K562 (cell line): ENCODE measurements at regions of chr6 and their contacts with region 1.

Region 1: GRCh38 chr6:84227434-84228197 is at the start of gene CEP162:
- DNase-seq: peak; percentile 87 to 93 (median 88)
- ATAC-seq: peak; percentile 99
- H3K4me3 ChIP-seq: peak within 1 kb of the TSS; percentile 82
- H3K27ac ChIP-seq: peak within 1 kb of the TSS; percentile 59; the same call in 2 of the 3 replicates
- H3K4me1 ChIP-seq: peaks cover 0 to 2% of the 10 kb centered on the region in 2 experiments; a peak in 2 of 5 replicates
- H3K27me3 ChIP-seq: no peaks in the 10 kb centered on the region
- CTCF ChIP-seq: peak; percentile 60 to 77 (median 76)
- EP300 ChIP-seq: no peak
- POLR2A ChIP-seq: peak; percentile 41; the same call in 1 of the 2 replicates
- RAD21 ChIP-seq: peak; percentile 61
- polyA plus RNA-seq, gene CEP162: 3.9 to 4.3 TPM

Region 2: GRCh38 chr6:84052204-84052882 is 175.3 kb before region 1 on chr6:
- CTCF ChIA-PET with region 1: no interaction called
- POLR2A ChIA-PET with region 1: no interaction called
- in situ Hi-C with region 1: no loop called
- intact Hi-C with region 1: loop called (anchors 10 kb)
- DNase-seq: peak; percentile 55 to 84 (median 69)
- ATAC-seq: peak; percentile 93
- H3K4me3 ChIP-seq: 0 out of 2 replicates have a peak overlapping the region, but pooled peaks have one; percentile 2
- H3K27ac ChIP-seq: peak overlapping the region; percentile 65
- H3K4me1 ChIP-seq: peaks cover 24 to 33% of the 10 kb centered on the region in 2 experiments
- H3K27me3 ChIP-seq: no peaks in the 10 kb centered on the region
- CTCF ChIP-seq: peak in 2 of 3 experiments; percentile 8 to 29; a peak in 3 of 6 replicates
- EP300 ChIP-seq: no peak
- POLR2A ChIP-seq: no peak
- RAD21 ChIP-seq: peak in 1 of 2 experiments; percentile 27; a peak in 1 of 4 replicates

Region 3: DNA sequence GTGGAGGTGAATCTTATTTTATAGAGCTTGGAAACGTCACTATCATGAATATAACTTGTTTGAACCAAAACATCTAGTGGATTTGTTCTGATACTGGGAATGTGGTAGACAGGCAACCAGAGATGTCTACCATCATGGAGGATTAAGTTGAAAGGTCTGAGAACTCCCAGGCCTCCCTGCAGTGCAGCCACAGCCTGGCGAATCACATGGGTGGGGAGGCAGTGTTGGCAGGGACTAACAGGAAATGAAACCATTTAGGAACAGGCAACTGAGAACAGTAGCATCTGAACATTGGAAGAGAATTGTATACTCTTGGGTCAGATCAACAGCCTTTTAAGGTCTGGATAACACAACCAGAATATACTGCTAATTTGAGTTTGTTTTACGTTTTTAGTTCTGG is 22.1 kb after region 1 on chr6:
- CTCF ChIA-PET with region 1: no interaction called
- POLR2A ChIA-PET with region 1: no interaction called
- in situ Hi-C with region 1: no loop called
- intact Hi-C with region 1: no loop called
- DNase-seq: no peak
- ATAC-seq: peak; percentile 49; the same call in 2 of the 3 replicates
- H3K4me3 ChIP-seq: no peak overlapping the region
- H3K27ac ChIP-seq: no peak overlapping the region
- H3K4me1 ChIP-seq: no peaks in the 10 kb centered on the region
- H3K27me3 ChIP-seq: no peaks in the 10 kb centered on the region
- CTCF ChIP-seq: no peak
- EP300 ChIP-seq: no peak
- POLR2A ChIP-seq: no peak
- RAD21 ChIP-seq: no peak

Region 4: DNA sequence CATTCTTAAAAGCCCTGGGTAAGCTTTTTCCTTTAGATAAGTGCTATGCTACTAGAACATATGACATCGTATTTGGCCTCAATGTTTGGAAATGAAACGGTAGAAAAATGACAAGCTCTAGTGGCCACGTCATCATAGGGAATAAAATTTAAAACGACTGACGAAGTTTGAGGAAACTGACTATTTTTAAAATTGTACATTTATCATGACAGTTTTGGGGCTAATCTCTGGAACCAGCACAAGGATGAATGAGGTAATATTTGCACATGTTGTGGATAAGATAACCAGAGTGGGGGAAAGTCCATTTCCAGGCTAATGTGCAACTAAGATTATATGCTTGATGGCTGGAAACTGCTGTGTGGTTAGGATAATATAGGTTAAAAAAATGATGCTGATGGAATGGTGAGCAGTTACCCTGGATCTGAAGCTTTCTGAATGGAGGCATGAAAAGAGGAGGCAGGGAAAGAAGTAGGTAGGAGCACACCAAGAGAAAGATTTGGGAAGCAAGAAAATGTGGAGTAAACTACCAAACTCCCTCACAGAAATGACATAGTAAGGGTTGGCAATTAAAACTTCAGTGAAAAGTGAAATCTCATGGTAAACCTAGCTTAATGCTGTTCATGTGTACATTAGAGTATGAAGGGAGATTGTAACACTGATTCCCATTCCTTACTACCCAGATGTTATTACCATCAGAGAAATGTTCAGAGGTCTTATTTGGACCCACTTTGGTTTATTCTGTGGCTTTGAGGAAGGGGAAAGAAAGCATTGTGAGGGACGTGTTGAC is 42.5 kb after region 1 on chr6:
- CTCF ChIA-PET with region 1: no interaction called
- POLR2A ChIA-PET with region 1: no interaction called
- in situ Hi-C with region 1: no loop called
- intact Hi-C with region 1: loop called (anchors 2 kb)
- DNase-seq: peak; percentile 45 to 92 (median 70)
- ATAC-seq: peak; percentile 94
- H3K4me3 ChIP-seq: no peak overlapping the region
- H3K27ac ChIP-seq: peak overlapping the region; percentile 87
- H3K4me1 ChIP-seq: peaks cover 0 to 27% of the 10 kb centered on the region in 2 experiments; a peak in 2 of 5 replicates
- H3K27me3 ChIP-seq: no peaks in the 10 kb centered on the region
- CTCF ChIP-seq: no peak
- EP300 ChIP-seq: peak; percentile 99
- POLR2A ChIP-seq: no peak
- RAD21 ChIP-seq: no peak; a peak in 1 of 4 replicates

Region 5: DNA sequence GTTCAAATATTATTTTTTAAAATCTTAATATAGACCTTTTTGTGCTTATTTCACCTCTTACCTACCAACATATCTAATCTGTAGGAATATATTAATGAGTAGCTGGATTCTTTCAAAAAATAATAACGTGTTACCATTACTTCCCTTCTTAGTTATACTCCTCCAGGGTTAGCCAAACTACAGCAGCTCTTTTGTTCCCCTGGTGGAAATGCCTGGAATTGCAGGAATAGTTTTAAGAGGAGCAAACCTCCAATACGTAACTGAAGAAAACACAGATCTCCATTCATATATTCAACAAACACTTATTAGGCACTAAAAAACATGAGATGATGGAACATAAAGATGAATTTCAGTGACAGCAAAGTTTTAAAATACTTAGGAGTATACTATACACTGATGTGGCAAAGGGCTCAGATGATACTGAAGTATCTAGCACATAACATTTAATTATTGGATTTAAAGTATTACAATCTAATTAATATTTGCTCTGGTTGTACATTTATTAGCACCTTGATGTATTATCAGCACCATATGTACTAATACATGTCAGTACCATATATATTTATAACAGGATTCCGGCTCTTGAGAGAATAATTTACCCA is 458.5 kb after region 1 on chr6:
- CTCF ChIA-PET with region 1: no interaction called
- POLR2A ChIA-PET with region 1: no interaction called
- in situ Hi-C with region 1: no loop called
- intact Hi-C with region 1: no loop called
- DNase-seq: peak; percentile 18 to 51 (median 21)
- ATAC-seq: peak; percentile 77
- H3K4me3 ChIP-seq: no peak overlapping the region
- H3K27ac ChIP-seq: no peak overlapping the region
- H3K4me1 ChIP-seq: no peaks in the 10 kb centered on the region
- H3K27me3 ChIP-seq: no peaks in the 10 kb centered on the region
- CTCF ChIP-seq: peak in 2 of 3 experiments; percentile 63 to 64; a peak in 5 of 6 replicates
- EP300 ChIP-seq: no peak
- POLR2A ChIP-seq: no peak
- RAD21 ChIP-seq: peak; percentile 44 to 71

Region 6: DNA sequence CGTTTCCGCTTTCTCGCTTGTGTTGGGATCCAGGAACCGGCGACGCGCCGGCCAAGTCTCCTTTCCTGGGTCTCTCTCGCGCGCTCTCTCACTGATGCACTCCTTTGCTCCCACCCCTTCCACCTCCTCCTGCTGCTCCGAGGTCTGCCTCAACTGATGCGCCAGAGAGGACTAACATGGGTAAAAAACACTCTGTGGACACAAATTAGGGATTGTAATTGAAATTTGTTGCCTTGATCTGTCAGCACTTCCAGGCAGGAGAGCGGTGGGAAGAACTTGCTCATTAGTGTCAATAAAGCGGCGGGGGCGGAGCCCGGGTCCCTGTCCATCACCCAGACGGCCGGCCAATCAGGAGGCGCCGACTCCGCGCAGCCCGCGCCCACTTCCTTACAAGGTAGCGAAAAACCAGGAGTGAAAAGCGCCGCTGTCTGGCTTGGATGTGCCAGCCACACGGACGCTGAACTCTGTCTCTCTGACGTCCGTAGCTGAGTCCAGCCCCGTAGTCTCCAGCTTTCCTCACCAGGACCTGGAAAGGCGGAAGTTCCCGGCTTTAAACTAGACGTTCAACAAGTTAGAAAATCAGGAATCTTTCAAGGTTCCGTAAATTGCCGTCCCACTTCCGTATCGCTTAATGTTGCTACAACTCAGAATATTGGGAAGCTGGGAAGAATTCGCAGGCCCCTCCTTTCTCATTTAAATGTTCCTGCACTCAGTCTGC is 536.9 kb after region 1 on chr6 and contains the start of gene TBX18:
- CTCF ChIA-PET with region 1: no interaction called
- POLR2A ChIA-PET with region 1: no interaction called
- in situ Hi-C with region 1: no loop called
- intact Hi-C with region 1: loop called (anchors 5 kb)
- DNase-seq: peak; percentile 93 to 98 (median 94)
- ATAC-seq: peak; percentile 87
- H3K4me3 ChIP-seq: peak within 1 kb of the TSS; percentile 78
- H3K27ac ChIP-seq: peak within 1 kb of the TSS; percentile 87
- H3K4me1 ChIP-seq: peaks cover 7 to 15% of the 10 kb centered on the region in 2 experiments; a peak in 3 of 5 replicates
- H3K27me3 ChIP-seq: no peaks in the 10 kb centered on the region
- CTCF ChIP-seq: peak; percentile 28 to 33 (median 31); a peak in 4 of 6 replicates
- EP300 ChIP-seq: peak; percentile 47; the same call in 1 of the 2 replicates
- POLR2A ChIP-seq: peak; percentile 84
- RAD21 ChIP-seq: no peak; a peak in 1 of 4 replicates
- polyA plus RNA-seq, gene TBX18: 4.0 to 4.8 TPM

Region 7: GRCh38 chr6:84967389-84967788 is 739.8 kb after region 1 on chr6:
- CTCF ChIA-PET with region 1: no interaction called
- POLR2A ChIA-PET with region 1: no interaction called
- in situ Hi-C with region 1: no loop called
- intact Hi-C with region 1: loop called (anchors 5 kb)
- DNase-seq: peak; percentile 32 to 65 (median 36)
- ATAC-seq: peak; percentile 90
- H3K4me3 ChIP-seq: no peak overlapping the region
- H3K27ac ChIP-seq: no peak overlapping the region
- H3K4me1 ChIP-seq: no peaks in the 10 kb centered on the region
- H3K27me3 ChIP-seq: peaks cover 0 to 5% of the 10 kb centered on the region in 2 experiments; a peak in 2 of 5 replicates
- CTCF ChIP-seq: peak; percentile 62 to 74 (median 65)
- EP300 ChIP-seq: no peak
- POLR2A ChIP-seq: no peak
- RAD21 ChIP-seq: peak; percentile 83 to 89

Region 8: DNA sequence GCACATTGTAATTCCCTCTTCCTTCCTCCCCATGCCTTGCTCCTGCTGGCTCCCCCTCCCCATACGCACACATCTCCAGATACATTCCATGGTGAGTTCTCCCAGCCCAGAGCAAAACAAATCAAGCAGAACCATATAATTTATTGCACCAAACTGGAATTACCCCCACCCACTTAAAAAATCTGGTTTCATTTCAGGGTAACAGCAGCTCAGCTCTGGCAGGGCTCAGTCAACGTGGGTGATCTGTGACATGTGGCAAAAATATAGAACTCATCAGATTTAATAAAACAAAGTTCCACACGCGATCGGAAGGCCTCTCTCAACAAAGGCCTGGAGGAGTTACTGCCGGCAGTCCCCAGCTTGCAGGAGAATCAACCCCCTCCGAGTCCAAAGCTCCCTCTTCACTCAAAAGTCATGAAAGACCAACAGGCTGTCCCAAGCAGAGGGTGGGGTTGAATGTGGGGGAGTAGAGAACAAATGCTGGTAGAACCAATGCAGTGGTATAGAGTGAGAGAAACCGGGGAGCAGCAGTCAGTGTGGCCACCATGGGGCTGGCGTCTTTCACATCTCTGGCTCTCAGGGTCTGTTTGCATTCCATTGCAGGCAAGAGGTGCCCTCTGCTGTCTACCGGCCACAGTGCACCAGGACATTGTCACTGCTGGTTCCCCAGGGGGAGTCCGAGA is 899.0 kb after region 1 on chr6:
- CTCF ChIA-PET with region 1: no interaction called
- POLR2A ChIA-PET with region 1: no interaction called
- in situ Hi-C with region 1: no loop called
- intact Hi-C with region 1: loop called (anchors 5 kb)
- DNase-seq: peak; percentile 39 to 62 (median 48)
- ATAC-seq: peak; percentile 100
- H3K4me3 ChIP-seq: no peak overlapping the region
- H3K27ac ChIP-seq: no peak overlapping the region
- H3K4me1 ChIP-seq: no peaks in the 10 kb centered on the region; a peak in 1 of 5 replicates
- H3K27me3 ChIP-seq: no peaks in the 10 kb centered on the region
- CTCF ChIP-seq: peak; percentile 81 to 89 (median 82)
- EP300 ChIP-seq: no peak
- POLR2A ChIP-seq: no peak
- RAD21 ChIP-seq: peak; percentile 89 to 93

Region 9: DNA sequence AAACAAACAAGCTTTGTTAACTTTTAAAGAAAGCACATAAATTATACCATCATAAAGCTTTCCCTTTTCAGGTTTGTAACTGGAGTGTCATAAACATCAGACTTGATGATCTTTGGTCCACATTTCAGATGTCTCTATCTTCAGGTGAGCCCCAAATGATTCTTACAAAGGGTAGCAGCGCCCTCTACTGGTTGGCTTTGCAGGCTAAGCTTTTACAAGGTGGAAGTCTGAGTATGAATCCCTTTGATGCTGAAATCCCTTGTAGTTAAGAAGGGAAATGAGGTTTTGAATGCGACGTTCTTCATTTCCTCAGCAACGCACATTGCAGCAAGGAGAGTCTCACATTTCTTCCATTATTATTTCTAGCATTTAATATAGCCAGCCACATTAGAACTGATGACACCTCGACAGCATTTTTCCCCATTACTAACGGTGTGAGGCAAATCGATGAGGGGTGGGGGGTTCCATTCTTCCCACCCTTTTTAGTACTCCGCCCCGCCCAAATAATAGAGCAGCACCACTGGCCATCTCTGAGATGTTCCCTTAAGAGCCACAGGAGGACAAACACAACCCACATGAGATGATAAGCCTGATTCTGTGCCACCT is 1095.9 kb after region 1 on chr6:
- CTCF ChIA-PET with region 1: no interaction called
- POLR2A ChIA-PET with region 1: no interaction called
- in situ Hi-C with region 1: no loop called
- intact Hi-C with region 1: loop called (anchors 10 kb)
- DNase-seq: peak; percentile 37 to 82 (median 56)
- ATAC-seq: peak; percentile 92
- H3K4me3 ChIP-seq: no peak overlapping the region
- H3K27ac ChIP-seq: no peak overlapping the region
- H3K4me1 ChIP-seq: no peaks in the 10 kb centered on the region
- H3K27me3 ChIP-seq: no peaks in the 10 kb centered on the region
- CTCF ChIP-seq: peak; percentile 68 to 84 (median 83)
- EP300 ChIP-seq: no peak
- POLR2A ChIP-seq: no peak
- RAD21 ChIP-seq: peak; percentile 74 to 83